Activated T-helper 1 cell treated with anti-CD3 and anti-CD28 coated beads, Interleukin-12 subunit alpha, Interleukin-12 subunit beta, Interleukin-2, Interleukin-4 antibody, amounts not matched to agents 30 ng/mL and 10 ng/mL and 1 ng/mL, durations not matched to agents 14 hours and 24 hours and 36 hours (primary cell): ENCODE measurements at regions of chr12 and their contacts with region 1.

Region 1: GRCh38 chr12:14995583-14996425 is 23.0 kb downstream of the PDE6H start:
- DNase-seq: no peak
- H3K4me3 Mint-ChIP-seq: no peak overlapping the region
- H3K27ac Mint-ChIP-seq: no peak overlapping the region
- H3K4me1 Mint-ChIP-seq: peaks cover 28% of the 10 kb centered on the region
- H3K27me3 Mint-ChIP-seq: peaks cover 27% of the 10 kb centered on the region

Region 2: DNA sequence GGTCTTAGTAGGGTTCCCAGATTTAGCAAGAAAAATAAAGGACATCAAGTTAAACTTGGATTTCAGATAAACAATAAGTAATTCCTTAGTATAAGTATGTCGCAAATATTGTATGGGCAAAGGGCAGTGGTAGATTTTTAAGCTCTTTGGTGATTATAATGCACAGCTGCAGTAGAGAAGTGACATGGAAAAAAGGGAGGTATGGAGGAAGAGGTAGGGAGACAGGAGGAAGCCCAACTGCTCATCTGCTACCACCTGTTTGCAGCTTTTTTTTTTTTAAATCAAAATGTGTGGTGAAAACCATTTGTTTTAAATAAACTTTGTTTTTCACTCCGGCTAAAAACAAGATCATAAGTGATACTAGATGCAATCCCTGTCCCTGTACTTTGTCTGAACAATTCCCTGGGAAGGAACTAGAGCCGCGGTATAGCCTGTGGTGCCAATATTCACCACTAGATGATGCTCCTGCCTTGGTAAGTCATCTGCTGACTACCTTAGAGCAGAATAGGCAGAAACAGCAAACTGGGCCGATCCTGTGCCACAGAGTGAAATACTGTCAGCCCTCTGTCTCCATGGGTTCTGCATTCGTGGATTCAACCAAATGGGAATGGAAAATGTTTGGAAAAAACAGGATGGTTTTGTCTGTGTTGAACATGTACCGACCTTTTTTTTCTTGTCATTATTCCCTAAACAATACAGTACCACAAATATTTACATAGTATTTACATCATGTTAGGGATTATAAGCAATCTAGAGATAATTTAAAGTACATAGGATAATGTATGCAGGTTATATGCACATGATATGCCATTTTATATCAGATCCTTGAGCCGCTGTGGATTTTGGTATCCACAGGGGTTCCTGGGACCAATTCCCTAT is 365.7 kb before region 1 on chr12:
- intact Hi-C with region 1: loop called (anchors 2 kb)
- DNase-seq: peak; percentile 42
- H3K4me3 Mint-ChIP-seq: no peak overlapping the region
- H3K27ac Mint-ChIP-seq: no peak overlapping the region
- H3K4me1 Mint-ChIP-seq: no peaks in the 10 kb centered on the region
- H3K27me3 Mint-ChIP-seq: peaks cover 10% of the 10 kb centered on the region

Region 3: GRCh38 chr12:14774906-14775762 is 220.7 kb before region 1 on chr12:
- intact Hi-C with region 1: loop called (anchors 2 kb)
- DNase-seq: peak; percentile 36
- H3K4me3 Mint-ChIP-seq: peak overlapping the region; percentile 97
- H3K27ac Mint-ChIP-seq: peak overlapping the region; percentile 98
- H3K4me1 Mint-ChIP-seq: peaks cover 55% of the 10 kb centered on the region
- H3K27me3 Mint-ChIP-seq: no peaks in the 10 kb centered on the region

Region 4: DNA sequence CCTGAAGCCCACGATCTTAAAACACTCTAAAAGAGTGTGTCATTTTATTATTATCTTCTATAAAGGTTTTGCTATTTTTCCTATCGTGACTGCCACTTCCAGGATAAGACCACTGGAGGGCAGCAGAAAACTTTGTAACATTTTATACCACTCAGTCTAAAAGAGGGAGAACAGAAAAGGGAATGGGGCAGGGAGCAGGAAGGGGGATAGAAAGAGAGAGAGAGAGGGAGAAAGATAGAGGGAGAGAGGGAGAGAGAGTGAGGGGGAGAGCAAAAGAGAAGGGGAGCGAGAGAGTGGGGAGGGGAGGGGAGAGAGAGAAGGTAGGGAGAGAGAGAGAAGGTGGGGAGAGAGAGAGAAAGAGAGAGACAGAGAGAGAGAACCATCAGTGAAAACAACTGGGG is 150.5 kb before region 1 on chr12:
- intact Hi-C with region 1: loop called (anchors 1 kb)
- DNase-seq: peak; percentile 6
- H3K4me3 Mint-ChIP-seq: no peak overlapping the region
- H3K27ac Mint-ChIP-seq: no peak overlapping the region
- H3K4me1 Mint-ChIP-seq: peaks cover 5% of the 10 kb centered on the region
- H3K27me3 Mint-ChIP-seq: peaks cover 5% of the 10 kb centered on the region

Region 5: GRCh38 chr12:14892726-14893505 is 102.9 kb before region 1 on chr12:
- intact Hi-C with region 1: no loop called
- DNase-seq: no peak
- H3K4me3 Mint-ChIP-seq: no peak overlapping the region
- H3K27ac Mint-ChIP-seq: no peak overlapping the region
- H3K4me1 Mint-ChIP-seq: no peaks in the 10 kb centered on the region
- H3K27me3 Mint-ChIP-seq: peaks cover 7% of the 10 kb centered on the region

Region 6: GRCh38 chr12:14905269-14906004 is 90.4 kb before region 1 on chr12:
- intact Hi-C with region 1: no loop called
- DNase-seq: no peak
- H3K4me3 Mint-ChIP-seq: no peak overlapping the region
- H3K27ac Mint-ChIP-seq: no peak overlapping the region
- H3K4me1 Mint-ChIP-seq: peaks cover 24% of the 10 kb centered on the region
- H3K27me3 Mint-ChIP-seq: no peaks in the 10 kb centered on the region

Region 7: GRCh38 chr12:14948672-14949071 is 47.1 kb before region 1 on chr12:
- intact Hi-C with region 1: loop called (anchors 2 kb)
- DNase-seq: peak; percentile 49
- H3K4me3 Mint-ChIP-seq: peak overlapping the region; percentile 79
- H3K27ac Mint-ChIP-seq: peak overlapping the region; percentile 99
- H3K4me1 Mint-ChIP-seq: peaks cover 90% of the 10 kb centered on the region
- H3K27me3 Mint-ChIP-seq: no peaks in the 10 kb centered on the region

Region 8: GRCh38 chr12:14979468-14979867 is 16.3 kb before region 1 on chr12:
- intact Hi-C with region 1: loop called (anchors 2 kb)
- DNase-seq: no peak
- H3K4me3 Mint-ChIP-seq: no peak overlapping the region
- H3K27ac Mint-ChIP-seq: no peak overlapping the region
- H3K4me1 Mint-ChIP-seq: peaks cover 57% of the 10 kb centered on the region
- H3K27me3 Mint-ChIP-seq: no peaks in the 10 kb centered on the region

Region 9: GRCh38 chr12:15205341-15206010 is 209.7 kb after region 1 on chr12:
- intact Hi-C with region 1: no loop called
- DNase-seq: no peak
- H3K4me3 Mint-ChIP-seq: no peak overlapping the region
- H3K27ac Mint-ChIP-seq: no peak overlapping the region
- H3K4me1 Mint-ChIP-seq: no peaks in the 10 kb centered on the region
- H3K27me3 Mint-ChIP-seq: peaks cover 5% of the 10 kb centered on the region